Activated CD4-positive, alpha-beta memory T cell treated with anti-CD3 and anti-CD28 coated beads for 36 hours (primary cell): ENCODE measurements at regions of chr5 and their contacts with region 1.

Region 1: GRCh38 chr5:180291943-180292831 is at the start of gene MAPK9:
- DNase-seq: peak; percentile 87
- H3K4me3 Mint-ChIP-seq: peak within 1 kb of the TSS; percentile 92
- H3K27ac Mint-ChIP-seq: peak within 1 kb of the TSS; percentile 92
- H3K4me1 Mint-ChIP-seq: peaks cover 29% of the 10 kb centered on the region
- H3K27me3 Mint-ChIP-seq: no peaks in the 10 kb centered on the region
- total RNA-seq, gene MAPK9: 41.7 to 43.2 TPM

Region 2: GRCh38 chr5:180209137-180209581 is 83.0 kb before region 1 on chr5 and contains the start of gene RASGEF1C:
- CTCF ChIA-PET with region 1: interaction called, 7 read pairs
- POLR2A ChIA-PET with region 1: no interaction called
- intact Hi-C with region 1: loop called (anchors 10 kb)
- DNase-seq: peak; percentile 68
- H3K4me3 Mint-ChIP-seq: peak within 1 kb of the TSS; percentile 30
- H3K27ac Mint-ChIP-seq: no peak within 1 kb of the TSS
- H3K4me1 Mint-ChIP-seq: peaks cover 5% of the 10 kb centered on the region
- H3K27me3 Mint-ChIP-seq: peaks cover 41% of the 10 kb centered on the region
- total RNA-seq, gene RASGEF1C: not detected

Region 3: DNA sequence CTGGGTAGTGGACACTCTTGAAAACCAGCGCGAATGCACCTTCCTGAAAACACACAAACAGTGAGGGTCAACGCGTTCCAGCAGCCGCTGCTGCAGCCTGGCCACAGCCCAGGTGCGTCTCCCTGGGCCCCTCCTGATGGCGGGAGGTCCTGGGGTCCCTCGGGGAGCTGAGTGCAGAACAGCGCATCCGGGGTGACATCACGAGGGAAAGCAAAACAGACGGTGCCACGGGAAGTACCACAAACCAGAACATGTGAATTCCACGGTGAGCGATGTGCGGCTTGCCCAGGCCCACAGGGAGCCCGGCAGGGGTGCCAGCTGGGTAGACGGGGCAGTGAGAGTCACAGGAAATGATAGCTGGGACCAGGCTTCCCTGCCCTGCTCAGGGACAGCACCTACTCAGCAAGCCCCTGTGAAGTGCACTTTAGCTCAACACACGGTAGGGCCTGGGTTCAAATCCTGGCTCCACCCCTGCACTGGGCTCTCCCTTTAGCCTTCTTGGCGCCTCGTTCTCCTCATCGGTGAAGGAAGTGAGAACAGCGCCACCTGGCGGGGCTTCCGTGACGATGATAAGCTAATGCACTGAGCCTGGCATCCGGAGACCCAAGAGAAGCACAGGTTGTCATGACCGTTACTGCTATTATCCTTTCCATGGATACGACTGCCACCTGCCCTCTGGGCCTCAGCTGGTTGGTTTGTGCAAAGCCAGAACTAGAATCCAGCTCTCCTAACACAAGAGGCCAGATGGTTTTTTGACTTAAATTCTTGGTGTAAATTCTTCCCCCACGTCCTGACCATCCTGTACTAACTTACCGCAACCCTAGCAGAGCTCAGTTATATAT is 36.3 kb after region 1 on chr5:
- CTCF ChIA-PET with region 1: interaction called, 68 read pairs
- POLR2A ChIA-PET with region 1: interaction called, 5 read pairs
- intact Hi-C with region 1: loop called (anchors 1 kb)
- DNase-seq: peak; percentile 90
- H3K4me3 Mint-ChIP-seq: no peak overlapping the region
- H3K27ac Mint-ChIP-seq: no peak overlapping the region
- H3K4me1 Mint-ChIP-seq: no peaks in the 10 kb centered on the region
- H3K27me3 Mint-ChIP-seq: peaks cover 6% of the 10 kb centered on the region

Region 4: DNA sequence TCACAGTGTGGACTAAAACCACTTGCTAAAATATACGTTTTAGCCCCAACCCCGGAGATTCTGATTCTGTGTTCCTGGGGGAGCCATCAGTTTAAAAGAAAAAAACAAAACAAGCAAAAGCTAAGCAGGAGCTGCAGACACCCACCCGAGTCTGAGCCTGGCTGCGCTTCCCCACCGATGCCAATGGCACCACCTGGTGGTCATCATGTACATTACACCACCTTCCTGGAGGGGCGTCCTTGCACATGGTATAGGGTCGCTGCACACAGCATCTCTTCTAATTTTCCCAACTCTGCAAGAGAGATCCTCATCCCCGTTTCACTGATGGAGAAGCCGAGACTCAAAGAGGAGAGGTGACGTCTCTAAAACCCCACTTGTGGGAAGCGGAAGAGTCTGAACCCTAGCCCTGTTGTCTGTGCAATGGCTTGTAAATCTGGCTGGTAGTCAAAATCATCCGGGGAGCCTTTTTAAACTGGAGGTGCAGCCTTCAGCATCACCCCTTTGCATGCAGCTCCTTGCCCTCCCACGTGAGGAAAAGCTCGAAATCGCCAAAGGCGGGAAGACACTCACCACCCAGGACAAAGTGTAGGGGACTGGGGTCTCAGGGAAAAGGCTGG is 178.9 kb after region 1 on chr5:
- CTCF ChIA-PET with region 1: interaction called, 9 read pairs
- POLR2A ChIA-PET with region 1: no interaction called
- intact Hi-C with region 1: loop called (anchors 1 kb)
- DNase-seq: peak; percentile 58
- H3K4me3 Mint-ChIP-seq: no peak overlapping the region
- H3K27ac Mint-ChIP-seq: no peak overlapping the region
- H3K4me1 Mint-ChIP-seq: no peaks in the 10 kb centered on the region
- H3K27me3 Mint-ChIP-seq: peaks cover 1% of the 10 kb centered on the region

Region 5: GRCh38 chr5:180802325-180803180 is 510.4 kb after region 1 on chr5 and contains the start of gene MGAT1:
- CTCF ChIA-PET with region 1: no interaction called
- POLR2A ChIA-PET with region 1: no interaction called
- intact Hi-C with region 1: loop called (anchors 5 kb)
- DNase-seq: peak; percentile 84
- H3K4me3 Mint-ChIP-seq: peak within 1 kb of the TSS; percentile 85
- H3K27ac Mint-ChIP-seq: peak within 1 kb of the TSS; percentile 96
- H3K4me1 Mint-ChIP-seq: peaks cover 75% of the 10 kb centered on the region
- H3K27me3 Mint-ChIP-seq: no peaks in the 10 kb centered on the region
- total RNA-seq, gene MGAT1: 101 to 106 TPM